Endothelial cell of umbilical vein (primary cell): ENCODE measurements at regions of chr5 and their contacts with region 1.

Region 1: GRCh38 chr5:41794473-41794872 is 75.8 kb downstream of the OXCT1 start:
- DNase-seq: peak; percentile 95
- H3K4me3 ChIP-seq: peak overlapping the region in 1 of 3 experiments; percentile 47
- H3K27ac ChIP-seq: peak overlapping the region; percentile 97
- H3K4me1 ChIP-seq: peaks cover 52% of the 10 kb centered on the region
- H3K27me3 ChIP-seq: no peaks in the 10 kb centered on the region
- CTCF ChIP-seq: no peak
- POLR2A ChIP-seq: peak; percentile 43

Region 2: GRCh38 chr5:41817625-41818301 is 23.3 kb after region 1 on chr5:
- CTCF ChIA-PET with region 1: interaction called, 3 read pairs
- POLR2A ChIA-PET with region 1: no interaction called
- dilution Hi-C with region 1: no loop called
- intact Hi-C with region 1: loop called (anchors 1 kb)
- DNase-seq: no peak
- H3K4me3 ChIP-seq: no peak overlapping the region
- H3K27ac ChIP-seq: no peak overlapping the region
- H3K4me1 ChIP-seq: peaks cover 18% of the 10 kb centered on the region
- H3K27me3 ChIP-seq: no peaks in the 10 kb centered on the region
- CTCF ChIP-seq: no peak
- POLR2A ChIP-seq: no peak

Region 3: GRCh38 chr5:42985129-42986037 is 1190.9 kb after region 1 on chr5:
- CTCF ChIA-PET with region 1: no interaction called
- POLR2A ChIA-PET with region 1: no interaction called
- dilution Hi-C with region 1: no loop called
- intact Hi-C with region 1: loop called (anchors 10 kb)
- DNase-seq: peak; percentile 82
- H3K4me3 ChIP-seq: no peak overlapping the region
- H3K27ac ChIP-seq: peak overlapping the region; percentile 95
- H3K4me1 ChIP-seq: peaks cover 64% of the 10 kb centered on the region
- H3K27me3 ChIP-seq: no peaks in the 10 kb centered on the region
- CTCF ChIP-seq: no peak
- POLR2A ChIP-seq: peak; percentile 57